PC-9 (cell line): ENCODE measurements at regions of chr7 and their contacts with region 1.

Region 1: DNA sequence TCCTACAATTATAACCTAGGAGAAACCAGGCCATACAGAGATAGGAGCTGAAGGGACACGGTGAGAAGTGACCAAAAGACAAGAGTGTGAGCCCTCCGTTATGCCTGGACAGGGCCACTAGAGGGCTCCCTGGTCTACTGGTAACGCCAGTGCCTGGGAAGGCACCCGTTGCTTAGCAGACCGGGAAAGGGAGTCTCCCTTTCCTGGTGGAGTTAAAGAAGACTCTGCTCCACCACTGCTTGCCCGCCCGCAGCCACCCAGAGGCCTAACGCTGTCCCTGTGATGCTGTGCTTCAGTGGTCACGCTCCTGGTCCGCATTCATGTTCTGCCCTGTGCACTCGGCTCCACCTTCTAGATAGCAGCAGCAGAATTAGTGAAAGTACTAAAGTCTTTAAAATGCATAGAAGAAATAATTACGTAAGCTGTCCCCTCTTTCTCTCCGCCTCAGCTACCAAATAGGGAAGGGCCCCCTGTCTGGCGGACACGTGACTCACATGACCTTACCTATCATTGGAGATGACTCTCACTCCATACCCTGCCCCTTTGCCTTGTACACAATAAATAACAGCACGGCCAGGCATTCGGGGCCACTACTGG is 34.8 kb downstream of the GRID2IP start:
- DNase-seq: peak; percentile 74 to 83
- H3K4me3 ChIP-seq: no peak overlapping the region
- H3K27ac ChIP-seq: no peak overlapping the region
- H3K4me1 ChIP-seq: 0 out of 2 replicates have a peak, but pooled peaks cover 3% of the 10 kb centered on the region
- H3K27me3 ChIP-seq: no peaks in the 10 kb centered on the region; the same call in 1 of the 2 replicates
- CTCF ChIP-seq: peak; percentile 95

Region 2: GRCh38 chr7:5514440-5515035 is 1001.9 kb before region 1 on chr7:
- CTCF ChIA-PET with region 1: no interaction called
- POLR2A ChIA-PET with region 1: interaction called, 10 read pairs
- intact Hi-C with region 1: no loop called
- DNase-seq: peak; percentile 29 to 81
- H3K4me3 ChIP-seq: peak overlapping the region; percentile 90
- H3K27ac ChIP-seq: peak overlapping the region; percentile 97
- H3K4me1 ChIP-seq: peaks cover 36% of the 10 kb centered on the region
- H3K27me3 ChIP-seq: no peaks in the 10 kb centered on the region
- CTCF ChIP-seq: no peak; the same call in 1 of the 2 replicates

Region 3: GRCh38 chr7:6577365-6578113 is 61.1 kb after region 1 on chr7 and contains the start of gene ZDHHC4:
- CTCF ChIA-PET with region 1: interaction called, 5 read pairs
- POLR2A ChIA-PET with region 1: no interaction called
- intact Hi-C with region 1: loop called (anchors 10 kb)
- DNase-seq: peak; percentile 81 to 92
- H3K4me3 ChIP-seq: peak within 1 kb of the TSS; percentile 82
- H3K27ac ChIP-seq: peak within 1 kb of the TSS; percentile 72
- H3K4me1 ChIP-seq: peaks cover 17% of the 10 kb centered on the region
- H3K27me3 ChIP-seq: no peaks in the 10 kb centered on the region
- CTCF ChIP-seq: 0 out of 2 replicates have a peak, but pooled peaks have one; percentile 19
- total RNA-seq, gene ZDHHC4: 96.1 and 123 TPM in 2 replicates

Region 4: DNA sequence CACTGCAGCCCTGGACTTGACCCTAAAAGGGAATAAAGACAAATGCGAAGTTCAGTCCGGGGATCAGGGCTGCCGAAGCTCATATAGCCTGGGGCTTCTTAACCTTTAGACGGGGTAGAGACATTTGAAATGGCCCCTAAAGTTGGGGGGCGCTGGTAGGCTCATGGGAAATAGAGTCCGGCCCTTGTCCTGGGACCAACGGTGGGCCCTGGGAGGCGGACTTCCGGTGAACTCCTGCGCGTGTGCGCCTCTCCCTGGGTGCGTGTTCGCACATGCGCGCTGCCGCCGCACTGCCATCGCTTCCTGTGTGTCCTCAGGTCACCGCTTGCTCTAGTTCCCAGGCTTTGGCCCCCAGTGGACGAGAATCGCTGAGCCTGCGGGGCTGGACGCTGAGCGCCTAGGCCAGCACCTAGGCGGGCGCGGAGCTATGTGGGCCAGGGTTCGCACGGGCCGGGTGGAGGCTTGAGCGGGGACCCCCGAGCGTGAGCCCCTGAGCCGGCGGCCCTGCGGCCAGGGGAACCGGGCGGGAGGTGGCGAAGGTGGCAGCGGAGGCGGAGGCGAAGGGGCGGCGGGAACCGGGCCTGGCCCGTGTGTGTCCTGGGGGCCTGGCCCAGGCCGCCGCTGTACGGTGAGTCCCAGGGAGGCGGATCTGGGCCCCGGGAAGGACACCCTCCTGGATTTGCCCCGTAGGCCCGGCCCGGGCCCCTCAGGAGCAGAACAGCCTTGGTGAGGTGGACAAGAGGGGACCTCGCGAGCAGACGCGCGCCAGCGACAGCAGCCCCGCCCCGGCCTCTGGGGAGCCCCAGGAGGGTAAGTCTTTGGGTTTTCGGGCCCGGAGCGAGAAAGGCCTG is 213.2 kb after region 1 on chr7:
- CTCF ChIA-PET with region 1: no interaction called
- POLR2A ChIA-PET with region 1: no interaction called
- intact Hi-C with region 1: loop called (anchors 10 kb)
- DNase-seq: peak; percentile 83 to 90
- H3K4me3 ChIP-seq: peak overlapping the region; percentile 88
- H3K27ac ChIP-seq: peak overlapping the region; percentile 61
- H3K4me1 ChIP-seq: peaks cover 5% of the 10 kb centered on the region
- H3K27me3 ChIP-seq: no peaks in the 10 kb centered on the region
- CTCF ChIP-seq: peak; percentile 17; the same call in 1 of the 2 replicates

Region 5: DNA sequence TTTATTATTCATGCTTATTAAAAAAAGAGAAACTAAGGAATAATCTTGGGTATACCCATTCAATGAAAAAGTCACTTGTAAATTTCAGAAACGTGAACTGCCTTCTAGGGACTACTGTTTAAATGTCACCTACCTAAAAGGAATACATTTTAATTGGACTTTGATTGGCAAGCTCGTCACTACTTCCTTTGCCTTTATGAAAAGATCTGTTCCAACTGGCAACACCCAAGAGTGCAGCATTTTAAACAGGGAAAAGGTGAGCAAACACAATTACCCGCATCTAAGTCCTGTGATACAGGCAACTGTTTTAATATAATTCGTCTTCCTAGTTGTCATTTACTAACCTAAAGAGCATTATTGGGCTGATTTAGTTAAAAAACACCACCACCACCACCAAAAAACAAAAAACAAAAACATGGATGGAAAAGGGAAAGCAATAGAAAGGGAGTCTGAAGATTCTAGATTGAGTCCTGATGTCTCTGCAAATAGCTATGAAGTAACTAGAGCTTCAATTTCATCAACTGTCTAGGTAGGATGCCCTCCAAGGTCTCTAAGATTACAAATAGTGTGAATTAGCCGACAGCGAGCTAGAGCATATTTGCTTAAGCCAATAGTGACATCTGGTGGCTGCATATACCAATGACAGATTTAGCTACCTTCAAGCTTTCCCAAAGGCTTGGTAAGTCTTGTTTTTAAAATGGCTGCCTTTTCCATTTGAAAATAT is 1779.3 kb after region 1 on chr7:
- CTCF ChIA-PET with region 1: no interaction called
- POLR2A ChIA-PET with region 1: no interaction called
- intact Hi-C with region 1: loop called (anchors 1 kb)
- DNase-seq: peak; percentile 46 to 82
- H3K4me3 ChIP-seq: no peak overlapping the region
- H3K27ac ChIP-seq: no peak overlapping the region
- H3K4me1 ChIP-seq: peaks cover 11% of the 10 kb centered on the region
- H3K27me3 ChIP-seq: no peaks in the 10 kb centered on the region
- CTCF ChIP-seq: peak; percentile 93